ENCODE measurements at regions of chr7 and their contacts with region 1.

Region 1: DNA sequence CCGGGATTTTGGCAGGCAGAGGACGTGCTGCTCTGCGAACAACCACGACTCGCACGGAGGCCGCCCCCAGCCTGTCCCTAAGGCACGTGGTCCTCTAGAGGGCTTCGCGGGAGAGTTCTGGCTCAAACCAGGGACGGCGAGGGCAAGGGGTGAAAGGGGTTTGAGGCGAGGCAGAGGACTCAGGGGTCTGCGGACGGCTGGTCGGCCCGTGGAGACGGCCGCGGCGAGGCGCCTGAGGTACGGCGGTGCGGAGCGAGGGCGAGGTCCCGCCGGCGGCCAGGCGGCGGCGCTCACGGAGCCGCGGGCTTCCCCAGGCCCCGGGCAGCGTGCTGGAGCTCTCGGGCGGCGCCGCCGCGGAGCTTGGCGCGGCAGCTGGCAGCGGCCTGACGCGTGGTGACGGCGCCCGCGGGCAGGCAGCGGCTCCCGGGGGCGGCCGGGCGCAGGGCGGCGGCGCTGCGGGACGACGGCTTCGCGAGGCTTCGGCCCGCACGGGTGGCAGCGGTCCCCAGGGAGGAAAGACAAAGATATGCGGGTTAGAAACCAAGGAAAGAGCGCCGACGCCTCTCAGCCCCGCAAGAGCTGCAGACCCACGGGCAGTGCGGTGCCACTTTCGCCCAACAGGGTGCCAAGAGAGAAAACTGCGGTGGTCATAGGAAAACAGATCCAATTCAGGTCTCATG is 44.8 kb downstream of the ZNF800 start:
- DNase-seq: peak; percentile 81
- H3K4me3 Mint-ChIP-seq: peak overlapping the region; percentile 43
- H3K27ac Mint-ChIP-seq: no peak overlapping the region
- H3K4me1 Mint-ChIP-seq: peaks cover 22% of the 10 kb centered on the region
- H3K27me3 Mint-ChIP-seq: no peaks in the 10 kb centered on the region

Region 2: GRCh38 chr7:127365164-127365956 is 17.7 kb after region 1 on chr7:
- CTCF ChIA-PET with region 1: interaction called, 12 read pairs
- POLR2A ChIA-PET with region 1: interaction called, 4 read pairs
- intact Hi-C with region 1: no loop called
- DNase-seq: no peak
- H3K4me3 Mint-ChIP-seq: no peak overlapping the region
- H3K27ac Mint-ChIP-seq: no peak overlapping the region
- H3K4me1 Mint-ChIP-seq: peaks cover 33% of the 10 kb centered on the region
- H3K27me3 Mint-ChIP-seq: no peaks in the 10 kb centered on the region

Region 3: DNA sequence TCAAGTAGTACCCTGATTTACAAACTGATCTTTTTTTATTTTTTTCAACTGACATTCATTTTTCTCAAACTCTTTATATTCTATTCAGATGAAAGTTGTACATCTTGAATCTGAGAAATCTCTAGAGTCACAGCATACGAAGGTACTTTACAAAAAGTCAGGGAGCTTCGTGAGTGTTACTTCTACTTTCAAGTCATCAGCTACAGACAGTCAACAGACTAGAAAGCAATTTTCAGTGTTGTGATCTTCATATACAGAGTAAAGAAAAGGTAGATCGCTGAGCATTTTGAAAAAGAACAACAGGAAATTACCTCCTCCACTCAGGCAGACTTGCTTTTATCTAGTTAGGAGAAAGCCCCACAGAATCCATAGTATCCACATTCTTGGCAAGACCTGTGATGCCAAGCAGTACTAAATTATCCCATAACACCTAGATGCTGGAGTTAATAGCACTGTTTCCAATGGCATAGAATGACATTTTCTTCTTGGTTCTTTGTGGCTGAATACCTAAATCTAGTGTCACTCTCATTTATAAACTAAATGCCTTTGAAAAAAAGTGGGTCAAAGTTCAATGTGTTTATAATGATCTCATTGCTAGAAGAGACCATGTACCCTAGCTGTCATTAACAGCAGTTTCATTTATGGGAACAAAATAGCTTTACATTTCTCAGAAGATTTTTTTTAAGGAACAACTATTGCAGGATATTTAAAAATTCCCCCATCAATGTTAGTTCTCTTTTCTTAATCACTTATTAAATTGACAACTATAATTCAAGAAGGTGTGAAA is 56.8 kb after region 1 on chr7:
- CTCF ChIA-PET with region 1: interaction called, 10 read pairs
- POLR2A ChIA-PET with region 1: no interaction called
- intact Hi-C with region 1: loop called (anchors 1 kb)
- DNase-seq: no peak
- H3K4me3 Mint-ChIP-seq: no peak overlapping the region
- H3K27ac Mint-ChIP-seq: peak overlapping the region; percentile 49
- H3K4me1 Mint-ChIP-seq: peaks cover 17% of the 10 kb centered on the region
- H3K27me3 Mint-ChIP-seq: no peaks in the 10 kb centered on the region

Region 4: GRCh38 chr7:127514499-127514898 is 166.8 kb after region 1 on chr7:
- CTCF ChIA-PET with region 1: interaction called, 3 read pairs
- POLR2A ChIA-PET with region 1: no interaction called
- intact Hi-C with region 1: loop called (anchors 1 kb)
- DNase-seq: no peak
- H3K4me3 Mint-ChIP-seq: no peak overlapping the region
- H3K27ac Mint-ChIP-seq: no peak overlapping the region
- H3K4me1 Mint-ChIP-seq: no peaks in the 10 kb centered on the region
- H3K27me3 Mint-ChIP-seq: peaks cover 13% of the 10 kb centered on the region

Region 5: GRCh38 chr7:127651556-127652332 is 304.0 kb after region 1 on chr7 and contains the start of gene SND1:
- CTCF ChIA-PET with region 1: interaction called, 3 read pairs
- POLR2A ChIA-PET with region 1: no interaction called
- intact Hi-C with region 1: loop called (anchors 5 kb)
- DNase-seq: peak; percentile 100
- H3K4me3 Mint-ChIP-seq: peak within 1 kb of the TSS; percentile 98
- H3K27ac Mint-ChIP-seq: peak within 1 kb of the TSS; percentile 94
- H3K4me1 Mint-ChIP-seq: peaks cover 31% of the 10 kb centered on the region
- H3K27me3 Mint-ChIP-seq: no peaks in the 10 kb centered on the region
- total RNA-seq, gene SND1: 208 to 235 TPM